ENCODE measurements at regions of chr1 and their contacts with region 1.

Region 1: DNA sequence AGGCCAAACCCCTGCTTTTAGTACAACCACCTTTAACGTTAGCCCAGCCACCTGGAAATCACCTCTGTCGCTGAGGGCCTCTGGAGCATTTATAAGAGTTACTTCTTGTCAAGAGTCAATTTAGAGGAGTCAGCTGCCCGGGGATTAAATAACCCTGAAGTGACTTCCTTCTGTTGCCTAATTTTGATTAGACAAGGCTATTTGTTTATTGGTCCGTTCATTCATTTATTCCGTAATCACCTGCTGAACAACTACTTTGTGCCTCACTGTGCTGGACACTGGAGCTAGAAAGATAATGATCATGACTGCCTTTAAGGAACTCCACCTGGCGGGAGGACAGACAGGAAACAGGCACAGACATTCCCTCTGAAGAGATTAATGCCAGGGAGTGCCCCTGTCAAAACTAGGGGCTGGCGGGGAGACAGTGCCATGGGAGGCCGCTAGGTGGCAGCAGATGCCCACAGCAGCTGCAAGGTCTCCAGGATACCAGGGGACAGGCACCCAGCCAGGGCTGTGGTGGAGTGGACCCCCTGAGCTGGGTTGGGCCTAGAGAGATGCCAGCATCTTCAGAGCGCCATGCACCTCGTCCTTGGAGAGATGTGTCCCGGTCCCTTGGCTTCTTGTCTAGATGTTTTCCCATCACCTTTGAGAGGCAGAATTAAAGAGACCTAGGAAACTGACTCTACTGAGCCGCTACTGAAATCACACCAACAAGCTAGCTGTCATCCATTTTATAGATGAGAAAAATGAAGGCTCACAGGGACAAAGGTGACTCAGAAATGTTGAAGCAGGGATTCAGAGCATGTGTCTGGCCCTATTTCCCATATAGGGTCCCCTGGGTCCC is 3.7 kb downstream of the REN start:
- DNase-seq: peak; percentile 57
- H3K4me3 Mint-ChIP-seq: no peak overlapping the region
- H3K27ac Mint-ChIP-seq: no peak overlapping the region
- H3K4me1 Mint-ChIP-seq: no peaks in the 10 kb centered on the region
- H3K27me3 Mint-ChIP-seq: peaks cover 4% of the 10 kb centered on the region

Region 2: GRCh38 chr1:204207136-204207616 is 44.7 kb after region 1 on chr1:
- intact Hi-C with region 1: loop called (anchors 1 kb)
- DNase-seq: peak; percentile 51
- H3K4me3 Mint-ChIP-seq: no peak overlapping the region
- H3K27ac Mint-ChIP-seq: no peak overlapping the region
- H3K4me1 Mint-ChIP-seq: peaks cover 5% of the 10 kb centered on the region
- H3K27me3 Mint-ChIP-seq: peaks cover 41% of the 10 kb centered on the region

Region 3: GRCh38 chr1:204398217-204399081 is 236.0 kb after region 1 on chr1:
- intact Hi-C with region 1: loop called (anchors 1 kb)
- DNase-seq: peak; percentile 30
- H3K4me3 Mint-ChIP-seq: no peak overlapping the region
- H3K27ac Mint-ChIP-seq: peak overlapping the region; percentile 50
- H3K4me1 Mint-ChIP-seq: peaks cover 8% of the 10 kb centered on the region
- H3K27me3 Mint-ChIP-seq: no peaks in the 10 kb centered on the region